ENCODE measurements at regions of chr1 and their contacts with region 1.

Region 1: DNA sequence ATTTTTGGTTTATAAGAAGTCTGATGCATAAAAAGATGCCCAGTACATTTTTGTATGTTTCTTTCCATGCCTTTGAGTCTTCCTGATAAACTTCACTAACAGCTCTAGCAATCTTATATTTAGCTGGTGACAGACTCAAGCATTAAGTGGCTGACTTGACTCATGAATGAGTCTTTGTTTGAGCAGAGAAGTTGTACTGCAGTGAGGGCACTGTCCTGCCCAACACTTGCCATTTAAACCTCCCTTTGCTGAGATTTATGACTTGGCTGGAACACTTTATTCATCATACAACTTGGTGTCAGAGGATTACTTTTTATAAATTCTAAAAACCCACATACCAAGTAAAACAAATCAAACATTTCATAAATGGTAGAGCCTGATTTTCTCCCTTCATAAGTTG is 14.6 kb upstream of the CAMSAP2 start:
- DNase-seq: no peak
- H3K4me3 Mint-ChIP-seq: no peak overlapping the region
- H3K27ac Mint-ChIP-seq: no peak overlapping the region
- H3K4me1 Mint-ChIP-seq: no peaks in the 10 kb centered on the region
- H3K27me3 Mint-ChIP-seq: no peaks in the 10 kb centered on the region
- CTCF ChIP-seq: no peak

Region 2: DNA sequence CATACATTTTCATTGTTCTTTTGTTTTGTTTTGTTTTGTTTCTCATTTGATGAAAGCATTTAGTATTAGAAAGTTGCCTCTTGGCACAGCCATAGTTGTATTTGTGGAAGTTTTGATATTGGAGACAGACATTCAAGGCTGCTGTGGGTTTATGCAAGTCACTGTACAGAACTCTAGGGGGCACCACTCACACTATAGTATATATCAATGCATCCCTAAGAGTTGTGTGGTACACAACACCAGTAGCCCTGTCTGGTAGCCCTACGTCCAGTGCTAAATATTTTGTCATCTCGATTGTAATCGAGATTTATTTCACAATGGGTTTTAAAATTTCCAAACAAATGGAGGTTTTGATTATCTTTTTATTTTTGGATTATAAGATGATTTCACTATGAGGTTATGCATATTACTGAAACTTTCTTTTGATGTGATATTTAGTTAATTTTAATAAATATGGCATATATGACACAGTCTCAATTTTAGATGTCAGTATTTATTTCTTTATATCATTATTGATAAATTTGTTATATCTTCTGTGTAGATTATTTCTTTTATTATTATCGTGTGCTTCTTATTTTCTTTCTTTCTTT is 584.3 kb before region 1 on chr1:
- CTCF ChIA-PET with region 1: interaction called, 11 read pairs
- intact Hi-C with region 1: no loop called
- DNase-seq: peak; percentile 46
- H3K4me3 Mint-ChIP-seq: no peak overlapping the region
- H3K27ac Mint-ChIP-seq: no peak overlapping the region
- H3K4me1 Mint-ChIP-seq: no peaks in the 10 kb centered on the region
- H3K27me3 Mint-ChIP-seq: no peaks in the 10 kb centered on the region
- CTCF ChIP-seq: peak; percentile 69

Region 3: DNA sequence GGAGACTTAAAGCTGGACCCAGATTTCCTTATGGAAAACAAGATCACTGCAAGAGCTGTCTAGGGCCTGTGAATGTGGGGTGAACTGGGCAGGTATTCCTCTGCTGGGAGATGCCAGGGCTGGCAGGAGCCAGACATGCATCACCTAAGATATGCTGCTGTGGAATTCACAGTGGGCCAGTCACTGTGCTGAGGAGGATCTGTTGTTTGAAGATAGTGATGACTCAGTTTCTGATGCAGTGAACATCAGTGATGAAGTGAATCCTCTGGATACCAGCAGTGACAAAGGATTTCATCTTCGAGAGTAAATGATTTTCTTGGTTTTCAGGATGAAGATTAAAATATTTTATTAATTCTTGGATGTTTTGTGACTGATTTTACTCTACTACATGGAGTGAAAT is 15.3 kb before region 1 on chr1:
- CTCF ChIA-PET with region 1: no interaction called
- intact Hi-C with region 1: no loop called
- DNase-seq: no peak
- H3K4me3 Mint-ChIP-seq: no peak overlapping the region
- H3K27ac Mint-ChIP-seq: no peak overlapping the region
- H3K4me1 Mint-ChIP-seq: no peaks in the 10 kb centered on the region
- H3K27me3 Mint-ChIP-seq: no peaks in the 10 kb centered on the region
- CTCF ChIP-seq: no peak

Region 4: GRCh38 chr1:201053158-201053860 is 329.2 kb after region 1 on chr1:
- CTCF ChIA-PET with region 1: no interaction called
- intact Hi-C with region 1: no loop called
- DNase-seq: peak; percentile 20
- H3K4me3 Mint-ChIP-seq: no peak overlapping the region
- H3K27ac Mint-ChIP-seq: no peak overlapping the region
- H3K4me1 Mint-ChIP-seq: no peaks in the 10 kb centered on the region
- H3K27me3 Mint-ChIP-seq: peaks cover 96% of the 10 kb centered on the region
- CTCF ChIP-seq: peak; percentile 32